ENCODE measurements at regions of chr17 and their contacts with region 1.

Region 1: GRCh38 chr17:33038740-33039139 is 47.1 kb downstream of the SPACA3 start:
- DNase-seq: peak; percentile 73
- H3K4me3 ChIP-seq: no peak overlapping the region
- H3K27ac ChIP-seq: no peak overlapping the region
- H3K4me1 ChIP-seq: no peaks in the 10 kb centered on the region
- H3K27me3 ChIP-seq: no peaks in the 10 kb centered on the region; the same call in 1 of the 2 replicates
- CTCF ChIP-seq: peak; percentile 77
- EP300 ChIP-seq: no peak
- RAD21 ChIP-seq: peak; percentile 59

Region 2: DNA sequence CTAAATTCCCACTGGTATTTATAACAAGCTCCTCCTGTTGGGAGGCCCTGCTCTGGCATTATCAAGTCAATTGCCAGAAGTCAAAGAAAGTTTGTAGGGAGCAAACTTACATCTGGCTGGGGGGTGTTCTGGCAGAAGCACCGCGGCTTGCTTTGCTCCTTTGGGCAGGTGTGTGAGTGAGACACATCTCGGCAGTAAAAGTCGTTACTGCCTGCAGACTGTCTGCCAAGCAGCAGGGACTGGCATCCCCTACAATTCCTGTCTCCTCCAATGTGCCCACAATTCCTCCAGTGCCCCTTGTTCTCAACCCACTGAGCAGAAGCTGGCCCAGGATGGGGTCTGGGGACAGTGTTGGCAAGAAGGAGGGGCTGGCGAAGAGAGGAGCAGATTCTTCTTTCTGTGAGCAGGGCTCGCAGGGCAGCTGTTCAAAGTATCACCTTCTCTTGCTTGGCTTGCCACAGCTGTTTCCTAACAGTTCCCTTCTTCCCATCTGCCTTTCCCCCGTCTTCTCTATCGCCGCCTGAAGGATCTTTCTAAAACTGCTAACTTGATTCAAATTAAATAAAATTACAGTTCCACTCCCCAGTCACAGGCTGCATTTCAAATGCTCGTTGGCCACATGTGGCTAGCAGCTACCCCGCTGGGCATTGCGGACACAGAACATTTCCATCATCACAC is 16.9 kb before region 1 on chr17:
- CTCF ChIA-PET with region 1: interaction called, 18 read pairs
- POLR2A ChIA-PET with region 1: no interaction called
- DNase-seq: no peak
- H3K4me3 ChIP-seq: no peak overlapping the region
- H3K27ac ChIP-seq: no peak overlapping the region
- H3K4me1 ChIP-seq: no peaks in the 10 kb centered on the region
- H3K27me3 ChIP-seq: no peaks in the 10 kb centered on the region
- CTCF ChIP-seq: no peak
- EP300 ChIP-seq: no peak
- RAD21 ChIP-seq: no peak

Region 3: DNA sequence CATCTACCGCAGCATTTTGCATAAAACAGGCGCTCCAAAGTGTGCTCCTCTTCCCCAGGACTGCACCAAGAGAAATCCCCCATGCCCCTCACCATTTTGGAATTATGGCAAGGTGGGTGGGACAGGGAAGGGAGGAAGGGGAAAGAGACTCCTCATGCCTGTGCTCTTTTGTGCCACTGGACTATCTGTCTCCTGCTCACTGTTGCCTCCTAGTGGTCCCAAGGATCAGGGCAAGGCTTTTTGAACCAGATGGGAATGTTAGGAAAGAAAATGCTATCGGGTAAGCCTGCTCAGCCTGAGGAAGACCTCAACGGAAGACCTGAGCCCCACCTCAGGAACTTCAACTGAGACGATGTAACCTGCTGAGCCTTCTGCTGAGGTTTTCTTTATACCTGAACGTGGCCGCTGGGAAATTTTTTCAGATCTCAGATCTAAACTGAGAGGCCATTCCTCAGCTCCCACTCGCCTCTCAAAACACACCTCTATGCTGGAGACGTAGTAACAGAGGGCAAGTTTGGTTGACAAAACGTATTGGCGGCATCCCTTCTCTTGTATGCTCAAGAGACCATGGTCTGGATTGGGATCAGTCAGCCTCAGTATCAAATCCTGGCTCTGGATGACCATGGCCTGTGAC is 11.2 kb after region 1 on chr17:
- CTCF ChIA-PET with region 1: interaction called, 17 read pairs
- POLR2A ChIA-PET with region 1: no interaction called
- DNase-seq: peak; percentile 61
- H3K4me3 ChIP-seq: peak overlapping the region in 1 of 2 experiments; percentile 36; a peak in 1 of 4 replicates
- H3K27ac ChIP-seq: no peak overlapping the region
- H3K4me1 ChIP-seq: no peaks in the 10 kb centered on the region
- H3K27me3 ChIP-seq: no peaks in the 10 kb centered on the region
- CTCF ChIP-seq: peak; percentile 84
- EP300 ChIP-seq: no peak
- RAD21 ChIP-seq: peak; percentile 52

Measured in SK-N-SH (cell line).